A549 (cell line): ENCODE measurements at regions of chr19 and their contacts with region 1.

Region 1: DNA sequence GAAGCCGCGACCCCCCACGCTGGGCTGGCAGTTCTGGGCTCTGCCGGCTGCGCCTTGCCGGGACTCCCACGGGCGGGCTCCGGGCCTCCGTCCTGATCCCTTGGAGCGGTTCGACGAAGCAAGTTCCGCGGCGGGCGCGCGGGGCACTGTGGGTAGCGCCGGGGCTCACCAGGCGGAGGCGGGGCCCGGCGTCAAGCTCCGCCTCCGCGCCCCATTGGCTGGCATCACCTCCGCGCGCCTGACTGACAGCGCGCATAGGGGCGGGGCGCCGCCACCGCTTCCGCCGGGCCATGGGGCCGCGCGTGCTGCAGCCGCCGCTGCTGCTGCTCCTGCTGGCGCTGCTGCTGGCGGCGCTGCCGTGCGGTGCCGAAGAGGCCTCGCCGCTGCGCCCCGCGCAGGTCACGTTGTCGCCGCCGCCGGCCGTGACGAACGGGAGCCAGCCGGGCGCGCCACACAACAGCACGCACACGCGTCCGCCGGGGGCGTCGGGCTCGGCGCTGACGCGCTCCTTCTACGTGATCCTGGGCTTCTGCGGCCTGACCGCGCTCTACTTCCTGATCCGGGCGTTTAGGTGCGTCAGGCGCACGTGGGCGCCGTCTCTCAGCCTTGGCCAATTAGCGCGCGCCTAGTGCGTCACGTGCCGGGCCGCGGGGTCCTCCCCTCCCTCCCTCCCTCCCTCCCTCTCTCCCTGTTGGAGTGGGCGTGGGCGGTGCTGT is at the start of gene FAM174C:
- DNase-seq: peak; percentile 81 to 97
- ATAC-seq: peak; percentile 78 to 79
- H3K4me3 ChIP-seq: peak within 1 kb of the TSS; percentile 80
- H3K27ac ChIP-seq: peak within 1 kb of the TSS; percentile 96 to 100
- H3K4me1 ChIP-seq: peaks cover 43% of the 10 kb centered on the region
- CTCF ChIP-seq: no peak
- EP300 ChIP-seq: no peak; a peak in 1 of 5 replicates
- POLR2A ChIP-seq: peak; percentile 85
- RAD21 ChIP-seq: no peak
- polyA plus RNA-seq, gene FAM174C: 22.7 and 24.8 TPM in 2 replicates

Region 2: DNA sequence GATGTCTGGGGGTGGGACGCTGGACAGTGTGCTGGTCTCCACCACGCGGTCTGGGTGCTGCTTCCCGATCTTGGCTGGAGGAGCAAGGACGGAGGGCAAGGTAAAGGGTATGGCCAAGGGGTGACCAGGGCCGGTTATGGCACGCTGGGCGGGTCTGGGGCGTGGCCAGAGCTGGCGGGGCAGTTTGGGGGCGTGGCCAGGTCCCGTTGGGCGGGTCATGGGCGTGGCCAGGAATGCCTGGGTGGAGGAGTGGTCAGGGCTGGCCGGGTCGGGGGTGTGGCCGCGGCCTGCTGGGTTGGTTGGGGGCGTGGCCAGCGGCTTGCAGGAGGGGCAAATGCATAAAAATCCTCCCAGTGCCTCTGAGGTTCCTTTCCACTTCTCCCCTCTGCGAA is 152.4 kb before region 1 on chr19:
- CTCF ChIA-PET with region 1: no interaction called
- POLR2A ChIA-PET with region 1: no interaction called
- DNase-seq: peak in 1 of 2 experiments; percentile 84
- ATAC-seq: peak; percentile 38 to 82; a peak in 4 of 6 replicates
- H3K4me3 ChIP-seq: no peak overlapping the region
- H3K27ac ChIP-seq: no peak overlapping the region
- H3K4me1 ChIP-seq: peaks cover 9% of the 10 kb centered on the region; the same call in 2 of the 3 replicates
- CTCF ChIP-seq: no peak
- EP300 ChIP-seq: no peak
- POLR2A ChIP-seq: no peak
- RAD21 ChIP-seq: no peak

Region 3: DNA sequence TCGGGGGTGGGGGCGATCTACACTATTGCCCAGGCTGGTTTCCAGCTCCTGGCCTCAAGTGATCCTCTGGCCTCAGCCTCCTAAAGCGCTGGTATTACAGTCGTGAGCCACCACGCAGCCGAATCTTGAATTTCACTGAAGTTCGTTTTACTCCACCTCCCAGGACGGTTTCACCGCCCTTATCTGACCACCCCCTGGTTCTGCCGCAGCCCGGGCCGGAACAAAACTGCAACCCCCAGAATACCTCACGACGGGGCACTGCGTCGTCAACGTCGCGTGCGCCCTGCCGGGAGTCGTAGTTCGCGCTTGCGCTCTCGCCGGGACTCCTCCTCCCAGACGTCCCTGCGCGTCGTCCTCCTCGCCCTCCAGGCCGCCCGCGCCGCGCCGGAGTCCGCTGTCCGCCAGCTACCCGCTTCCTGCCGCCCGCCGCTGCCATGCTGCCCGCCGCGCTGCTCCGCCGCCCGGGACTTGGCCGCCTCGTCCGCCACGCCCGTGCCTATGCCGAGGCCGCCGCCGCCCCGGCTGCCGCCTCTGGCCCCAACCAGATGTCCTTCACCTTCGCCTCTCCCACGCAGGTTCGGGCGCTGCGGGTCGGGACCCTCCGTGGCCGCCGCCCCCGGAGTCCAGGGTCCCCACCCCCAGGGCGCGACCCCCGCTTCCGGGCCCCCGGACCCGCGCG is 33.9 kb before region 1 on chr19 and contains the start of gene ATP5F1D:
- CTCF ChIA-PET with region 1: interaction called, 39 read pairs
- POLR2A ChIA-PET with region 1: interaction called, 12 read pairs
- DNase-seq: peak; percentile 83 to 94
- ATAC-seq: peak; percentile 51 to 66
- H3K4me3 ChIP-seq: peak within 1 kb of the TSS; percentile 77
- H3K27ac ChIP-seq: peak within 1 kb of the TSS; percentile 89 to 100
- H3K4me1 ChIP-seq: peaks cover 49% of the 10 kb centered on the region
- CTCF ChIP-seq: no peak
- EP300 ChIP-seq: no peak
- POLR2A ChIP-seq: peak; percentile 71
- RAD21 ChIP-seq: no peak
- polyA plus RNA-seq, gene ATP5F1D: 18.5 and 28.7 TPM in 2 replicates

Region 4: GRCh38 chr19:1291761-1292418 is 16.5 kb after region 1 on chr19:
- CTCF ChIA-PET with region 1: interaction called, 12 read pairs
- POLR2A ChIA-PET with region 1: interaction called, 4 read pairs
- DNase-seq: no peak
- ATAC-seq: no peak
- H3K4me3 ChIP-seq: no peak overlapping the region
- H3K27ac ChIP-seq: peak overlapping the region in 1 of 2 experiments; percentile 46; a peak in 3 of 6 replicates
- H3K4me1 ChIP-seq: peaks cover 23% of the 10 kb centered on the region
- CTCF ChIP-seq: no peak
- EP300 ChIP-seq: no peak
- POLR2A ChIP-seq: no peak
- RAD21 ChIP-seq: no peak

Region 5: DNA sequence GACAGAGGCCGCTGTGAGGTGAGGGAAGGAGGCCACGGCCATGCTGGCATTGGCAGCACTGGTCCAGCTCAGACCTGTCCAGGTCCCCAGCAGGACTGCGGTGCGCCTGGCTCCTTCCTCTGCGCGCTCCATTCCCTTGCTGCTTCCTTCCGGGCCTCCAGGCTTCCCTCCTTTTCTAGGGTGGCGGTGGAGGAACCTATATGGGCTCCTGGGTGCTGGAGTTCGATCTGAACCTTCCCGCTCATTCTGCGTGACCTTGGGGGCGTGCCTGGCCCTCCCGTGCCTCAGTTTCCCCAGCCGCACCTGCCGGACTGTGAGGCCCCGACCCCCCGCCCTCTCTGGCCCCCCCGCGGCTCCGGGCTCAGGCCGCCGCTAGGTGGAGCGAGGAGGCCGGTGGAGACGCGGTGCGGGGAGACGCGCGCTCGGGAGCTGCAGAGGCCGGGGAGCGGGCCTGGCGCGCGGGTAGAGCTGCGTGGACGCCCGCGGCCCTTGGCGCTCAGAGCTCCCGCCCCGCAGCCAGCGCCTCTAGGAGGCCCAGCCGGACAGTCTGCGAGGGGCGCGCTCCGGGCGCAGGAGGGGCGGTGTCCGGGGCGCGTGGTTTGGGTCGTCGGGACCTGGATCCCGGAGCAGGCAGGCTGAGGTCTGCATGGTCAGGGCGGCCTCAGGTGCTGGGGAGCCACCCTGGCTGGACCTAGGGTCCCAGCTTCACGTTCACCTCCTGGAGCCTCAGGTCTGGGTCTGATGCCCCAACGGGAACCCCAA is 40.2 kb after region 1 on chr19:
- CTCF ChIA-PET with region 1: interaction called, 20 read pairs
- POLR2A ChIA-PET with region 1: interaction called, 6 read pairs
- DNase-seq: peak; percentile 52 to 58
- ATAC-seq: peak; percentile 69 to 80
- H3K4me3 ChIP-seq: no peak overlapping the region
- H3K27ac ChIP-seq: peak overlapping the region; percentile 14 to 90; a peak in 4 of 6 replicates
- H3K4me1 ChIP-seq: peaks cover 25% of the 10 kb centered on the region
- CTCF ChIP-seq: peak; percentile 66
- EP300 ChIP-seq: no peak
- POLR2A ChIP-seq: no peak
- RAD21 ChIP-seq: peak; percentile 63 to 78

Region 6: DNA sequence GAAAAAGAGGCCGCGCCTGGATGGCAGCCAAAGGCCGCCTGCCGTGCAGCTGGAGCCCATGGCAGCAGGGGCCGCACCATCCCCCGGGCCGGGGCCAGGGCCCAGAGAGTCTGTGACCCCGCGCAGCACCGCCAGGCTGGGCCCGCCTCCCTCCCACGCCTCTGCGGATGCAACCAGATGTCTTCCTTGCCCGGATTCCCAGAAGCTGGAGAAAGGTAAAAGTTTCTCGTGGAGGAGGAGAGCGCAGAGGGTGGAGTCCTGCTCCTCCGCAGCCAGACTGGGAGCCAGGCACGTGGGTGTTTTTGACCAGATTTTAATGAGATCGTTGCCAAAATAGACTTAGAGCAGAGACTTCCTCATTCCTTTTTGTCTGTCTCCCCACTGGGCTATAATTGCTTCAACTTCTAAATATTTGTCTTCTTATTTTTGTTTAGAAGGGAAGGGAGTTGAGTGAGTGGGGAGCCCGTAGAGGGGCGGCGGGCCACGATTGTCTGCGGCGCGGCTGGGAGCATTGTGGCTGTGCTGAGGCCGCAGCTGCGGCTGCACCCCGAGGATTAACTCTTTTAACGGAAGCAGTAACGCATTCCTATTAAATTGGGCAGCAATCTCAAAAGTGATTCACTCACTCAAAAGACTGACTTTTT is 85.5 kb after region 1 on chr19:
- CTCF ChIA-PET with region 1: interaction called, 10 read pairs
- POLR2A ChIA-PET with region 1: no interaction called
- DNase-seq: no peak
- ATAC-seq: no peak
- H3K4me3 ChIP-seq: no peak overlapping the region
- H3K27ac ChIP-seq: no peak overlapping the region
- H3K4me1 ChIP-seq: peaks cover 14% of the 10 kb centered on the region; the same call in 2 of the 3 replicates
- CTCF ChIP-seq: no peak
- EP300 ChIP-seq: no peak
- POLR2A ChIP-seq: no peak
- RAD21 ChIP-seq: no peak

Region 7: GRCh38 chr19:1373534-1374249 is 98.3 kb after region 1 on chr19:
- CTCF ChIA-PET with region 1: interaction called, 37 read pairs
- POLR2A ChIA-PET with region 1: no interaction called
- DNase-seq: no peak
- ATAC-seq: no peak
- H3K4me3 ChIP-seq: no peak overlapping the region
- H3K27ac ChIP-seq: no peak overlapping the region
- H3K4me1 ChIP-seq: no peaks in the 10 kb centered on the region
- CTCF ChIP-seq: no peak
- EP300 ChIP-seq: no peak
- POLR2A ChIP-seq: no peak
- RAD21 ChIP-seq: no peak

Region 8: GRCh38 chr19:1383311-1384084 is 108.1 kb after region 1 on chr19 and contains the start of gene NDUFS7:
- CTCF ChIA-PET with region 1: interaction called, 15 read pairs
- POLR2A ChIA-PET with region 1: interaction called, 4 read pairs
- DNase-seq: peak; percentile 47 to 93
- ATAC-seq: peak; percentile 86 to 87
- H3K4me3 ChIP-seq: peak within 1 kb of the TSS; percentile 82
- H3K27ac ChIP-seq: peak within 1 kb of the TSS; percentile 78 to 96
- H3K4me1 ChIP-seq: peaks cover 4% of the 10 kb centered on the region; the same call in 1 of the 3 replicates
- CTCF ChIP-seq: 0 out of 3 replicates have a peak, but pooled peaks have one; percentile 12
- EP300 ChIP-seq: no peak
- POLR2A ChIP-seq: peak; percentile 23; the same call in 1 of the 2 replicates
- RAD21 ChIP-seq: peak in 1 of 2 experiments; percentile 17; a peak in 1 of 5 replicates
- polyA plus RNA-seq, gene NDUFS7: 18.6 and 19.3 TPM in 2 replicates